ENCODE measurements at regions of chr6 and their contacts with region 1.

Region 1: DNA sequence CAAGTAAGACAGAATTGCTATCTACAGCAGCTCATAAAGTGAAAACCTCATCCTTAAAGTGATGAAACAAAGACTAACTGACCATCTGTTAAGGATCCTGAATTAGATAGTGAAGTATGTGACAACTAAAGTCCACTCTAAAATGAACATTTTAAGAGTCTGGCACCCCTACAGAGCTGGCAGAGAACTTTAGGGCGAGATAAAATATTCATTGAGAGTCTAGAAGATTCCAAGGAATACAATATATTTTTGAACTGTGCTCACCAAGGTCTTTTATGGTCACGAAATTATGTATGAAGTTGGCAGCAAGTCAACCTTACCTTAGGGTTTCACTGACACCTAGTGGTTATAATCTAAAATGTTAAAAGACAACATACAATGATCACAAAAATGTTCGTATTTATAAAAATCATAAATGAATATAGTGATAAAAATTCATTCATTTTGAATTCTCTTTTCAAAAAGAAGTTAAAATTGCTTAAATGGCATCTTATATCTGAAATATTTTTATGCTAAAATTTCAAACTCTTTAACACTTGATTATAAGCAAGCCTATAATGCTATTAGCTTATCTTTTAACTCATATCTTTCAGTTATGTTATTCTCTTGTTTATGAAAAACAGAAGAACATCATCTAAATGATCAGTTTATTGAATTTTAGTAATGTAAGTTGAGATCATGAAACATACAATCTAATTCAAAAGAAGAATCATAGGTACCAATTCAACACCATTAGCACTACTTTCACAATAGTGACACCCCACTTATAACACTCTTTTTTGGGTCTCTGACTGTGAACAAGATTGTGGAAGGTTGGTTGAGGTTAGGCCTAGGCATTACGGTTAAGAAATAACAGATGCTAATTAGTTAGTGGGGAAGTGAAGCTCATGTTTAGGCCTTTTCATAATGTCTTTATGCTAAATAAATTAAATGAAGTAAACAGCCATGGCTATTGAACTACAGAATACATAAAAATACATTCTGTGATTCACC is 27.5 kb downstream of the RSPH3 start:
- DNase-seq: no peak
- H3K4me3 Mint-ChIP-seq: no peak overlapping the region
- H3K27ac Mint-ChIP-seq: no peak overlapping the region
- H3K4me1 Mint-ChIP-seq: no peaks in the 10 kb centered on the region
- H3K27me3 Mint-ChIP-seq: no peaks in the 10 kb centered on the region

Region 2: DNA sequence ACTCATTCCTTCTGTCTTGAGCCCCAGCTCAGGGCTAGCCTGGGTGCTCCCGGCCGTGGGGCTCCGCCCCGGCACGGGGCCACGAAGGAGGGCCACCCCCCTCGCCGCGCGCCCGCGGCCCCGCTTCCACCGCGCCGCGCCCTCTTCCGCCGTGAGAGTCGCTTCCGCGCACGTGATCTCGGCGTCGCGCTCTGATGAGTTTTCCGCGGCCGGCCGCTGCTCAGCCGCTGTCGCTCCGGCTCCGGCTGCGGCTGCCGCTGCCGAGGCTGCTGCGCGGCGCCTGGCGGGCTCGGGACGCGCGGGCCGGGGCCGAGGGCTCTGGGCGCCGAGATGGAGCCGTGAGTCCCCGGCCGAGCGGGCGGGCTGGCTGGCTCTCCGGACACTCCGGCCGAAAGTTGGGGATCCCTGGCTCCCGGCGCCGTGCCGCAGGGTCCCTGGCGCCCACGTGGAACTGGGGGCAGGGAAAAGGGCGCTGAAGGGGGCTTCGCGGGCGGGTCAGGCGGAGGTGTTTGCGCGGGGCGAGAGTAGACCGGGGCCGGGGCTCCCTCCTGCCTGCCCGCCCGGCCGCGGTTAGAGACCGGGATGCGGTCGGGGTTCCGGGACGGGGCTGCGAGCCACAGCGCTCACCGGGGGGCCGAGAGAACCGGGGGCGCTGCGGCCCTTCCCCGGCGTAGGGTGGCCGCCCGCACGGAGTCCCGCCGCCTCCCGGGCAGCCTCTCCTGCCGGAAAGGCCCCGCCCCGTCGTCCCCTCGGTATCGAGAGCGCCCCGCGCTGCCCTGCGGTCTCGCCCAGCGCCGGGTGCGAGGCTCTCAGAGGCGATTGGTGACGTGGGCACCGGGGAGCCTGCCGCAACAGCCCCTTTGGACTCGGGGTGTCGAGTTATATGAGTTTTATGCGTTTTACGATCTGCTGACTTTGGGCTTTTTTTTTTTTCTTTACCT is 412.4 kb before region 1 on chr6 and contains the start of gene TMEM181:
- CTCF ChIA-PET with region 1: no interaction called
- POLR2A ChIA-PET with region 1: no interaction called
- intact Hi-C with region 1: no loop called
- DNase-seq: peak; percentile 92
- H3K4me3 Mint-ChIP-seq: peak within 1 kb of the TSS; percentile 96
- H3K27ac Mint-ChIP-seq: peak within 1 kb of the TSS; percentile 91
- H3K4me1 Mint-ChIP-seq: peaks cover 43% of the 10 kb centered on the region
- H3K27me3 Mint-ChIP-seq: no peaks in the 10 kb centered on the region
- total RNA-seq, gene TMEM181: 11.3 to 11.6 TPM

Region 3: DNA sequence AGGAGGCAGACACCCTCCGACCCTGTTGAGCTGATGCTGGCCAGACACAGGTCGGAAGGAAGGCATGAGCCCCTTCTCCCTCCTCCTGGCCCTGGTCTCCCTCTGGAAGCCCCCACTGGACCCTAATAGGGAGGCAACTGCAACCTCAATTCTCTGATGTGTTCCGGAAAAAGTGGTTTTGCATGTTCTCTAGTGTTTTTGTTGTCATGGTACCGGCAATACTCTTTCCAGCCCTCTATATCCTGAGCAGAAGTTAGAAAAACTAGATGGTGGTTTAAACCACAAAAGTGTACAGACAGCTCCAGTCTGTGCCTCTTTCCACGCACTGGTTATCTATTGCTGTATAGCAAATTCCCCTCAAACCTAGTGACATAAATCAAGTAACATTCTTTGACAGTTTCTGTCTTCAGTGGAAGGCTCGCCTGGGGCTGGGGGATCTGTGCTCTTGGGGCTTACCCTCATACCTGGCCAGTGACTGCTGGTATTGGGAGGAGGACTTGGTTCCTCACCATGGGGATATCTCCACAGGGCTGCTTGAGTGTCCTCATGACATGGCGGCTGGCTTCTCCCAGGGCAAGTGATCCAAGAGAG is 285.7 kb before region 1 on chr6:
- CTCF ChIA-PET with region 1: interaction called, 10 read pairs
- POLR2A ChIA-PET with region 1: no interaction called
- intact Hi-C with region 1: no loop called
- DNase-seq: peak; percentile 38
- H3K4me3 Mint-ChIP-seq: no peak overlapping the region
- H3K27ac Mint-ChIP-seq: peak overlapping the region; percentile 47
- H3K4me1 Mint-ChIP-seq: peaks cover 64% of the 10 kb centered on the region
- H3K27me3 Mint-ChIP-seq: no peaks in the 10 kb centered on the region

Region 4: DNA sequence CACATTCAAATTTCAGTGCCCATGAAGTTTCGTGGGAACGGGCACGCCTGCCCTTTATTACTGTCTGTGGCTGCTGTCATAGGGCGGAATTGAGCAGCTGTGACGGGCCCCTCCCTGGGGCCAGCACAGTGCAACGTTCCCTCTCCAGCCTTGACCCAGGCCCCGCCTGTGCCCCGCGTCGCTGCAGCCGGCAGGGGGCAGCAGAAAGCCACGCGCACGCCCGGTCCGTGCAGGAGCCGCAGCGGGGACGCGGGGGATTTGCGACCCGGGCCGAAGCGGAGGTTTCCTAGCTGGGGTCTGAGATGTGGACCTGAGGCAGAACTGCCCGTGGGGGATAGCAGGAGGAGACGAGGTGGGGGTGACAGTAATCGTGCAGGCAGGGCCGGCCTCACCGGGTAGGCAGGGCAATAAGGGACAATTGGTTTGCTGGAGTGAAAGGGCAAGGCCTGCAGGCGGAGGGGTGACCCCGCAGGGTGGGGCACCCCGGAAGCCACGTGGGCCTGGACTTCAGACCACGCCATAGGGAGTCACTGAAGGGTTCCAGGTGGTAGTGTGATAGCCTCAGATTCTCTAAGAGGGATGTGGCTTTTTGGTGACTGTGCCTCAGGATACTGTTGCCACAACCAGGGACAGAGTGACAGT is 268.2 kb before region 1 on chr6:
- CTCF ChIA-PET with region 1: interaction called, 18 read pairs
- POLR2A ChIA-PET with region 1: no interaction called
- intact Hi-C with region 1: loop called (anchors 1 kb)
- DNase-seq: peak; percentile 84
- H3K4me3 Mint-ChIP-seq: peak overlapping the region; percentile 57
- H3K27ac Mint-ChIP-seq: peak overlapping the region; percentile 33
- H3K4me1 Mint-ChIP-seq: peaks cover 11% of the 10 kb centered on the region
- H3K27me3 Mint-ChIP-seq: no peaks in the 10 kb centered on the region

Region 5: GRCh38 chr6:158718461-158719046 is 254.0 kb before region 1 on chr6:
- CTCF ChIA-PET with region 1: interaction called, 4 read pairs
- POLR2A ChIA-PET with region 1: no interaction called
- intact Hi-C with region 1: loop called (anchors 5 kb)
- DNase-seq: no peak
- H3K4me3 Mint-ChIP-seq: no peak overlapping the region
- H3K27ac Mint-ChIP-seq: no peak overlapping the region
- H3K4me1 Mint-ChIP-seq: peaks cover 55% of the 10 kb centered on the region
- H3K27me3 Mint-ChIP-seq: no peaks in the 10 kb centered on the region

Region 6: DNA sequence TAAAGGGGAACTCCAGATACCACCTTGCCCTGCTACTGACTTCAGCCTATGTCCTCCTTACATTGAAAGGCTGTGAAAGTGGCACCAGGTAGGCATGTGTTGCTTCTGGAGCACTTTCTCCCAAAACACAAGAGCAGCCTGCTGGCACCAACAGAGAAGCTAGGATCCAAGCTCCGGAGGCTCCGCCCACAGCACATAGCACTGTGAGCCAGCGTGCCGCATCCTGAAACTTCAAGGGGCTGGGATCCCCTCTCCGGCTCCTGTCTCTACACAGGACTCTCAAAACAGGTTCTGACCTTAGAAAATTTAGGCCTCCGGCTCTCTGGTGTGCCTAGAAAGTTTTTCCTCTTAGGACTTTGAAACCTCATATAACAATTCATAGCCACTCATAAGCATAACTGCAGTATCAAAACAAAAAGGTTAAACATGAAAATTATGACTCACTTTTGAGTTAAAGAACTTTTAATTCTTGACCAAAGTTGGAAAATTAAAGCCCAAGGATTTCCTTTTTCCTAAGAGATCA is 194.5 kb before region 1 on chr6:
- CTCF ChIA-PET with region 1: interaction called, 5 read pairs
- POLR2A ChIA-PET with region 1: no interaction called
- intact Hi-C with region 1: loop called (anchors 5 kb)
- DNase-seq: no peak
- H3K4me3 Mint-ChIP-seq: no peak overlapping the region
- H3K27ac Mint-ChIP-seq: peak overlapping the region; percentile 85
- H3K4me1 Mint-ChIP-seq: peaks cover 46% of the 10 kb centered on the region
- H3K27me3 Mint-ChIP-seq: no peaks in the 10 kb centered on the region

Region 7: DNA sequence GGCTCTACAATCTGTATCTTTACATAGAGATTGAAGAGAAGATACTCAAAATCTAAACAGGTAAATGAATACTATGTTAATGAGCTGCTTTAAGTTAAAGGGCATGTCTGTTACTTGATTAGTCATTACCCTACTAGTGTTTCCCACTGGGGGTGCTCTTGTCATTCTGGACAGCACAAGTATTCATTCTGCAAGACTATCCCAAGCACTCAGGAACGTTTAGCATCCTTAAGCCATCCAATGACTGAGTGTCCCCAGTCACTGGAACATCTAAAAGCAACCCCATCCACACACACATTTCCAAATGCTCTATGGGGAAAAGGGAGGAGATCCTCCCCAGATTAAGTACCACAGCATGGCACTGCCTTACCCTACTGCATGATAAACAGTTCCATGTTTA is 179.1 kb before region 1 on chr6:
- CTCF ChIA-PET with region 1: interaction called, 20 read pairs
- POLR2A ChIA-PET with region 1: no interaction called
- intact Hi-C with region 1: loop called (anchors 5 kb)
- DNase-seq: no peak
- H3K4me3 Mint-ChIP-seq: no peak overlapping the region
- H3K27ac Mint-ChIP-seq: peak overlapping the region; percentile 49
- H3K4me1 Mint-ChIP-seq: peaks cover 82% of the 10 kb centered on the region
- H3K27me3 Mint-ChIP-seq: no peaks in the 10 kb centered on the region

Region 8: DNA sequence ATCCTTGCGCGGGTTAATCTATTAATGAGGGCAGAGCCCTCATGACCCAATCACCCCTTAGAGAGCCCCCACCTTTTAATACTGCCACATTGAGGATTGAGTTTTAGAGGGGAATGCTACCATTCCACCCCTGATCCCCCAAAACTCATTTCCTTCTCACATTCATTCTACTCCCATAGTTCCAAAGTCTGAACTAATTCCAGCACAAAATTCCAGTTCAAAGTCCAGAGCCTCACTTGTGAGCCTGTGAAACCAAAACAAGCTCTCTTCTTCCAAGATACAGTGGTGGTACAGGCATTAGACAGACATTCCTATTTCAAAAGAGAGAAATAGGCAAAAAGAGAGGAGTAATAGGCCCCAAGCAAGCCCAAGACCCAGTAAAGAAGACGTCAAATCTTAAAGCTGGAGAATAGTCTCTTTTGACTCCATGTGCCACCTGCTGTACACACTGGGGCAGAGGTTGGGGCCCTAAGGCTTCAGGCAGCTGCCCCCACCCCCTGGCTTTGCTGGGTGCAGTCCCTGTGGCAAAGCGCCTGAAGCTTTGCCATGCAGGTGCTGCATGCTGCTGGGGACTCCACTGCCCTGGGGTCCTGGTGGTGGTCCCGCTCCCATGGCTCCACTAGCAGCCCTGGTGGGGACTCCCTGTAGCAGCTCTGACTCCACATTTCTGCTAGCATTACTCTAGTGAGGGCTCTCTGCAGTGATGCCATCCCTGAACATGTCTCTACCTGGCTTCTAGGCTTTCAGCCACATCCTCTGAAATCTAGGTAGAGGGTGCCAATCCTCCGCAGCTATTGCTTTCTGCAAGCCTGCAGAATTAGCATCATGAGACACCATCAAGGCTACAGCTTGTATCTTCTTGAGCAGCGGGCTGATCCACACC is 13.8 kb before region 1 on chr6:
- CTCF ChIA-PET with region 1: interaction called, 18 read pairs
- POLR2A ChIA-PET with region 1: no interaction called
- intact Hi-C with region 1: no loop called
- DNase-seq: peak; percentile 37
- H3K4me3 Mint-ChIP-seq: no peak overlapping the region
- H3K27ac Mint-ChIP-seq: no peak overlapping the region
- H3K4me1 Mint-ChIP-seq: peaks cover 5% of the 10 kb centered on the region
- H3K27me3 Mint-ChIP-seq: no peaks in the 10 kb centered on the region